Common myeloid progenitor, CD34-positive (primary cell): ENCODE measurements at regions of chr7 and their contacts with region 1.

Region 1: DNA sequence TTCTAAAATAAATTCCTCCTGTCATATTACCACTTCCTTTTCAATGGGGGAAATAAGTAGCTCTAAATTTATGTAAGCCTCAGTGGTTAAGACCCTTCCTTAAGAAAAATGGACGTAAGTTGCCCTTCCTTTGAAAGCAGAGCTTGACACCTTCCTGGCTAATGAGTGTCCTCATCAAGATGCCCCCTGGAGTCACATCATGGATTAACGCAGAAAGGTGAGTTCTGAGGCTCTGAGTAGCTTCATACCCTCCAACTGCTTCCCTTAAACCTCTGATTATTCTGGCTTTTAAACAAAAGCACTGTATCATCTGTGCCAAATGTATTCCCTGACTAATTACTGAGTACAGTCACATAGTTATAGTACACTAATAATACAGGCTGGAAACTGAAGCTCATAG is 14.7 kb downstream of the KCTD7 start:
- DNase-seq: no peak
- H3K4me3 ChIP-seq: no peak overlapping the region
- H3K27ac ChIP-seq: no peak overlapping the region
- H3K4me1 ChIP-seq: peaks cover 0 to 3% (median 0%) of the 10 kb centered on the region in 4 experiments
- H3K27me3 ChIP-seq: peaks cover 0 to 61% (median 0%) of the 10 kb centered on the region in 5 experiments

Region 2: DNA sequence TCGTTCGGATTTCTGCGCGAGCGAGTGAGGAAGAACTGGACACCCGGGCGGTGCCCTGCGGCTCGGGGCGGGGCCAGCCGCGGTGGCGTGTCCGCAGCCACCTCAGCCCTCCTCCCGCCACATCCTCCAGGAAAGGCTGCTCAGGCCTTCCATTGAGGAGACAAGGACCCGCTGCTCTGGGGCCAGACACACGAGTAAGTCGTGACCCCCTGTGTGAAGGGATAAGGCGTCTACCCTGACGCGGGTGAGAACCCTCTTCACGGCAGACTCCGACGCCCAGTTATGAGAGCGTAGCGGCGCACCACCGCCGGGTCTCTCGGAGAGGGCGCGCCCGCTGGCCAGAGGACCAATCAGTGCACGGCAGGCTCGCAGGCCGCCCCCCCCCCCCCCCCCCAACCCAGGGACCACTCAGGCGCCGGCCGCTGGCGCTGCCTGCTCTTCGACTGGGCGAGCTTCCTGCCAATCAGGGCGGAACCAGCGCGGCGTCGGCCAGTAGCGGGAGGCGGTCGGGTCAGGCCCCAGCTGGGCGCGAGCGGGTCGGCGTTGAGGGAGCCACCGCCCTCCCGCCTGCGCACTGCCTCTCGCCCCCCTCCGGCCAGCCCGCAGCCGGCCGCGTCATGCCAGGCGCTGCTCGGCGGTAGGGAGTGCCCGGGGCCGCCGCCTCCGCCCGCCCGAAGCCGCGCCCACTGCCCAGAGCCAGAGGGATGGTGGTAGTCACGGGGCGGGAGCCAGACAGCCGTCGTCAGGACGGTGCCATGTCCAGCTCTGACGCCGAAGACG is 14.8 kb before region 1 on chr7 and contains the start of gene KCTD7:
- CTCF ChIA-PET with region 1: interaction called, 14 read pairs
- POLR2A ChIA-PET with region 1: interaction called, 3 read pairs
- DNase-seq: peak; percentile 94 to 98 (median 96)
- H3K4me3 ChIP-seq: peak within 1 kb of the TSS; percentile 67 to 94 (median 80)
- H3K27ac ChIP-seq: peak within 1 kb of the TSS in 1 of 2 experiments; percentile 61
- H3K4me1 ChIP-seq: peaks cover 12 to 37% (median 32%) of the 10 kb centered on the region in 4 experiments
- H3K27me3 ChIP-seq: peaks cover 0 to 67% (median 5%) of the 10 kb centered on the region in 5 experiments